Sciatic nerve (tissue), 2 donors: ENCODE measurements at regions of chr14 and their contacts with region 1.

Region 1: GRCh38 chr14:102957222-102957621 is 34.8 kb downstream of the AMN start:
- DNase-seq: no peak
- ATAC-seq: no peak

Region 2: DNA sequence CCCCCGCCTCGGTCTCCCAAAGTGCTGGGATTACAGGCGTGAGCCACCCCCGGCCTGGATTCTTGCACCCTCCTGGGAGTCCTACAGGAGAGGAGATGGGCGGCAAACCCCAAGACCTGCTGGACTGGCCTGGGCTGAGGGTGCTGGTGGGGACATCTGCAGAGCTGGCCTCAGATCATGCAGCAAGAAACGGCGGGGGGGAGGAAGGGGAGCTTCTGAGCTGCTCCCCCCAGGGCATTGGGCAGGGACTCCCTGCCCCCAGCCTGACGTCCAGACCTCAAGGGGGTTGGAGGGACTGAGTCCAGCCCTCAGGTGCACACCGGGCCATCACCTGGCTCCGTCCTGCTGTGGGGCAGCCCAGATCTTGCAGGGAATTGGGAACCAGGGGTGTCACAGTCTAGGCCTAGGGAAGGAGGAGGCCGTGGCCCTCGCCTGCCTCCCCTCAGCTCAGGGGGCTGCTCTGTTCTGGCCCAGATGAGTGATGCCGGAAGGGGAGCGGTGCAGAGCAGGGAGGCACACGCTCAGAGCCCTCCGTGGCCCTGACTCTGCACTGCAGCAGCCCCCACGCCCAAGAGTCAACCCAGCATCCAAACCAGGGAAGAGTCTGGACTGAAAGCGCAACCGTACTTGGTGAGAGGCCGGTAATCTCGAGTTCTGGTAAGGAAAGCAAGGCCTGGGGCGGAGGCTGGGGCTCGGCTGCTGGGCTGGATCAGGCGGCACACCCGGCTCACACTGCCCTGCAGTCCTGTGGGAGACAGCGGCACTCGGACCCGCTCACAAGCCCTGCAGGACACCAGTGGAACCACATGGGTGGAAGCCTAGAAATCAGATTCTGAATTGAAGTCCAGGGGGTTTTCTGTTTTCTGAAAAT is 43.6 kb before region 1 on chr14:
- intact Hi-C with region 1: no loop called
- DNase-seq: peak; percentile 52
- ATAC-seq: no peak

Region 3: GRCh38 chr14:103021801-103022384 is 64.7 kb after region 1 on chr14:
- intact Hi-C with region 1: loop called (anchors 2 kb)
- DNase-seq: peak; percentile 49
- ATAC-seq: no peak